ENCODE measurements at regions of chr1 and their contacts with region 1.

Region 1: GRCh38 chr1:82844911-82845827 is 1044.4 kb downstream of the ADGRL2 start:
- DNase-seq: no peak
- ATAC-seq: no peak
- H3K4me3 ChIP-seq: no peak overlapping the region
- H3K27ac ChIP-seq: no peak overlapping the region
- H3K4me1 ChIP-seq: no peaks in the 10 kb centered on the region
- H3K27me3 ChIP-seq: no peaks in the 10 kb centered on the region
- CTCF ChIP-seq: no peak
- EP300 ChIP-seq: no peak
- POLR2A ChIP-seq: no peak
- RAD21 ChIP-seq: no peak

Region 2: DNA sequence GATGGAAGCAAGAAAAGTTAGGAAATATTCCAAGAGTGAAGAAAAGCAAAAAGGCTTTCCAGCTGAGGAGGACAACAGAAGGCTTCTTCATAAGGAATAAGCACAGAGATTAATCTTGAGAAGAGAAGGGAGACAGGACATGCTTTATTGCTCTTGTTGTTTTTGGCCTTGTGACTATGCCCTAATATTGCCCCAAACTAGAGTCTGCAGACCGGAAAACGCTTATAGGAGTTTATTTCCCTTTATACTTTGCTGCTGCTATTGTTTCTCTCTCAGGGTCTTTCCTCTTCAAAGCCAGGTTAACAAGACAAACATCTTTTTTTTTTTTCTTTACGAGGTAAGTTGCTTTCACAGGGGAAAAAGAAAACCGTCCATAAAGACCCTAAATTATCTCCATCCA is 53.0 kb before region 1 on chr1:
- CTCF ChIA-PET with region 1: no interaction called
- POLR2A ChIA-PET with region 1: no interaction called
- RAD21 ChIA-PET with region 1: no interaction called
- SMC1A ChIA-PET with region 1: interaction called, 3 read pairs
- in situ Hi-C with region 1: no loop called
- intact Hi-C with region 1: loop called (anchors 5 kb)
- DNase-seq: no peak
- ATAC-seq: no peak
- H3K4me3 ChIP-seq: no peak overlapping the region
- H3K27ac ChIP-seq: no peak overlapping the region
- H3K4me1 ChIP-seq: no peaks in the 10 kb centered on the region
- H3K27me3 ChIP-seq: no peaks in the 10 kb centered on the region
- CTCF ChIP-seq: no peak
- EP300 ChIP-seq: no peak
- POLR2A ChIP-seq: no peak
- RAD21 ChIP-seq: no peak

Region 3: GRCh38 chr1:82920418-82921248 is 75.5 kb after region 1 on chr1:
- CTCF ChIA-PET with region 1: no interaction called
- POLR2A ChIA-PET with region 1: no interaction called
- RAD21 ChIA-PET with region 1: no interaction called
- SMC1A ChIA-PET with region 1: no interaction called
- in situ Hi-C with region 1: no loop called
- intact Hi-C with region 1: no loop called
- DNase-seq: no peak
- ATAC-seq: peak; percentile 20; the same call in 1 of the 3 replicates
- H3K4me3 ChIP-seq: no peak overlapping the region
- H3K27ac ChIP-seq: no peak overlapping the region
- H3K4me1 ChIP-seq: no peaks in the 10 kb centered on the region
- H3K27me3 ChIP-seq: no peaks in the 10 kb centered on the region
- CTCF ChIP-seq: no peak
- EP300 ChIP-seq: no peak
- POLR2A ChIP-seq: no peak
- RAD21 ChIP-seq: no peak

Region 4: GRCh38 chr1:83060221-83060620 is 215.1 kb after region 1 on chr1:
- CTCF ChIA-PET with region 1: no interaction called
- POLR2A ChIA-PET with region 1: no interaction called
- RAD21 ChIA-PET with region 1: no interaction called
- SMC1A ChIA-PET with region 1: no interaction called
- in situ Hi-C with region 1: no loop called
- intact Hi-C with region 1: no loop called
- DNase-seq: no peak
- ATAC-seq: no peak
- H3K4me3 ChIP-seq: no peak overlapping the region
- H3K27ac ChIP-seq: no peak overlapping the region
- H3K4me1 ChIP-seq: no peaks in the 10 kb centered on the region
- H3K27me3 ChIP-seq: no peaks in the 10 kb centered on the region
- CTCF ChIP-seq: no peak
- EP300 ChIP-seq: no peak
- POLR2A ChIP-seq: no peak
- RAD21 ChIP-seq: no peak

Measured in GM12878 (cell line).